ENCODE measurements at regions of chr16 and their contacts with region 1.

Region 1: GRCh38 chr16:57648590-57649442 is 19.3 kb upstream of the ADGRG3 start:
- DNase-seq: peak; percentile 77 to 94 (median 86)
- ATAC-seq: peak; percentile 84
- H3K4me3 ChIP-seq: peak overlapping the region in 1 of 2 experiments; percentile 53
- H3K4me3 Mint-ChIP-seq: peak overlapping the region; percentile 29
- H3K27ac ChIP-seq: peak overlapping the region in 1 of 2 experiments; percentile 69
- H3K27ac Mint-ChIP-seq: peak overlapping the region; percentile 64
- H3K4me1 ChIP-seq: peaks cover 29% of the 10 kb centered on the region
- H3K4me1 Mint-ChIP-seq: peaks cover 37% of the 10 kb centered on the region
- H3K27me3 ChIP-seq: no peaks in the 10 kb centered on the region
- H3K27me3 Mint-ChIP-seq: no peaks in the 10 kb centered on the region
- CTCF ChIP-seq: peak; percentile 100

Region 2: GRCh38 chr16:56932721-56933619 is 715.8 kb before region 1 on chr16:
- CTCF ChIA-PET with region 1: no interaction called
- POLR2A ChIA-PET with region 1: no interaction called
- intact Hi-C with region 1: no loop called
- DNase-seq: peak in 8 of 9 experiments; percentile 21 to 70 (median 37)
- ATAC-seq: no peak
- H3K4me3 ChIP-seq: peak overlapping the region; percentile 96 to 99
- H3K4me3 Mint-ChIP-seq: peak overlapping the region; percentile 98
- H3K27ac ChIP-seq: peak overlapping the region; percentile 83 to 95
- H3K27ac Mint-ChIP-seq: peak overlapping the region; percentile 98
- H3K4me1 ChIP-seq: peaks cover 25% of the 10 kb centered on the region
- H3K4me1 Mint-ChIP-seq: peaks cover 50% of the 10 kb centered on the region
- H3K27me3 ChIP-seq: no peaks in the 10 kb centered on the region
- H3K27me3 Mint-ChIP-seq: no peaks in the 10 kb centered on the region
- CTCF ChIP-seq: no peak

Region 3: DNA sequence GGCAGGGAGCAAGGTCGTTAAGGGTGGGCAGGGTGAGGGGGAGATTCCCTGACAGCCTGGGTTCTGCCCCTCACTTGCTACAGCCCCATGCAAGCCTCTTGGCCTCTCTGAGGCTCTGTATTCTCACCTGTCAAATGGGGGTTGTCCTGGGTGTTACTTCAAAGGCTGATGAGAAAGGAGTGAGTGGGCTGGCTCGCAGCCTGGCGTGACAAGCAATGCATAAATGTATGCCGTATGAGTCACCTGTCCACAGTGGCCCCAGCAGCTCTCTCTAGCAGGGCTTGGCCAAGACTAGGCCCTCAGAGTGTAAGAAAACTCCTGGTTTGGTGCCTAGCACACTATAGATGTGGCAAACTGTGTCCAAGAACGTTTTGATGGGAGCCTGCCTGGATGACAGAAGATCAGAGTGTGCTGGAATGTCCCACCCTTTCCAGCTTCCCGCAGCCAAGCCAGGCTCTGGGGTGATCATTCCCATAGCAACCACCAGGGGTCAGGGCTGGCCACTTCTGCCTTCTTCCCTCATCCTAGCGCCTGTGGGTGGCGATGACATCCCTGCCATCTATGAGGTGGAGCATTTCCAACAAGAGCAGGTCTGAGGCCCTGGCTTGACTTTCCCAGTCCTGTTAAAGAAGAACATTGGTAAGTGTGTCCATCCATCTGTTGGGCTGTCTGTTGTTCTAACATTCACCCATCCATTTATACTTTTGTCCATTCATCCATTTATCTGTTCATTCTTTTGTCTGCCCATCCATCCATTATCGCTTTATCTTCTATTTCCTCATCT is 57.5 kb before region 1 on chr16:
- CTCF ChIA-PET with region 1: interaction called, 423 read pairs
- POLR2A ChIA-PET with region 1: interaction called, 3 read pairs
- intact Hi-C with region 1: loop called (anchors 1 kb)
- DNase-seq: peak in 7 of 9 experiments; percentile 37 to 82 (median 61)
- ATAC-seq: peak; percentile 27
- H3K4me3 ChIP-seq: no peak overlapping the region
- H3K4me3 Mint-ChIP-seq: peak overlapping the region; percentile 66
- H3K27ac ChIP-seq: peak overlapping the region in 1 of 2 experiments; percentile 62
- H3K27ac Mint-ChIP-seq: peak overlapping the region; percentile 84
- H3K4me1 ChIP-seq: peaks cover 34% of the 10 kb centered on the region
- H3K4me1 Mint-ChIP-seq: peaks cover 47% of the 10 kb centered on the region
- H3K27me3 ChIP-seq: no peaks in the 10 kb centered on the region
- H3K27me3 Mint-ChIP-seq: no peaks in the 10 kb centered on the region
- CTCF ChIP-seq: peak; percentile 60

Region 4: GRCh38 chr16:57600048-57600835 is 48.6 kb before region 1 on chr16:
- CTCF ChIA-PET with region 1: interaction called, 180 read pairs
- POLR2A ChIA-PET with region 1: interaction called, 7 read pairs
- intact Hi-C with region 1: loop called in 1 of 2 experiments (anchors 2 kb)
- DNase-seq: peak in 4 of 9 experiments; percentile 39 to 64 (median 55)
- ATAC-seq: peak; percentile 19
- H3K4me3 ChIP-seq: no peak overlapping the region
- H3K4me3 Mint-ChIP-seq: no peak overlapping the region
- H3K27ac ChIP-seq: peak overlapping the region in 1 of 2 experiments; percentile 84
- H3K27ac Mint-ChIP-seq: peak overlapping the region; percentile 57
- H3K4me1 ChIP-seq: peaks cover 44% of the 10 kb centered on the region
- H3K4me1 Mint-ChIP-seq: peaks cover 49% of the 10 kb centered on the region
- H3K27me3 ChIP-seq: no peaks in the 10 kb centered on the region
- H3K27me3 Mint-ChIP-seq: no peaks in the 10 kb centered on the region
- CTCF ChIP-seq: peak; percentile 34

Region 5: GRCh38 chr16:57609541-57610401 is 39.0 kb before region 1 on chr16:
- CTCF ChIA-PET with region 1: interaction called, 64 read pairs
- POLR2A ChIA-PET with region 1: interaction called, 4 read pairs
- intact Hi-C with region 1: no loop called
- DNase-seq: peak in 8 of 9 experiments; percentile 22 to 88 (median 63)
- ATAC-seq: peak; percentile 95
- H3K4me3 ChIP-seq: peak overlapping the region in 1 of 2 experiments; percentile 13
- H3K4me3 Mint-ChIP-seq: peak overlapping the region; percentile 74
- H3K27ac ChIP-seq: peak overlapping the region; percentile 11 to 81
- H3K27ac Mint-ChIP-seq: peak overlapping the region; percentile 84
- H3K4me1 ChIP-seq: peaks cover 15% of the 10 kb centered on the region
- H3K4me1 Mint-ChIP-seq: peaks cover 48% of the 10 kb centered on the region
- H3K27me3 ChIP-seq: no peaks in the 10 kb centered on the region
- H3K27me3 Mint-ChIP-seq: no peaks in the 10 kb centered on the region
- CTCF ChIP-seq: peak; percentile 39

Region 6: DNA sequence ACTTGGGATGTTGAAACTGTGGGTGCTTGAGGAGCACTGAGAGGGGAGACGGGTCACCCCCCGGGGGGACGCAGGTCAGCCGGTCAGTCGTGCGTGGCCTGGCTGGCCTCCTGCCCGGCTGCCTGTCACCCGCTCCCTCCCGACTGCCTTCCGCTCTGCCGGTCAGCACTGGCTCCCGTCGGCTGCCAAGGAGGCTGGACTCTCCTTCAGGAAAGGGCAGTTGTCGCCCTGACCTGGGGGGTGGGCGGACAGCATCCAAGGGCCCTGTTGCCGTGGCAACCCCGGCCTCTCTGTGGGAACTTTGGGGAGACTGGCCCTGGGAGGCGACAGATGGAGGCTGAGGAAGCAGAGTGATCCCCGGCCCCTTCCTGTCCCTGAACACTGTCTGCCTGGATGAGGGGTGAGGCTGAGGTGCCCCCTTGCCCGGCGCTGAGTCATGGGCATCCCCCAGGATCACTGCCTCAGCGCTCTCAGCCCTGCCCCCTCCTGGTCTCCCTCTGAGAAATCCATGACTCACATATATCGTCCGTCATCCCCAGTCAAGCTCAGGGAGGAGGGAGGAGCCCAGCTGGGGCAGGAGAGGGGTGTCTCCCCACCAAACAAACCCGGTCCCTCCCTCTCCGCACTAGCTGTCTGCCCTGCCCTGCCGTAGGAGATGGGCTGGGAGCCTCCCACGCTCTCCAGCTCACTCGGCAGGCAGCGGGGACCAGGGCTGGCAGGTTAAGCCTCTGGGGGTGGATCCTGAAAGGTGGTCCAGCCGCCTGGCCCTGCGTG is 20.6 kb before region 1 on chr16 and contains the start of gene ADGRG1:
- CTCF ChIA-PET with region 1: interaction called, 23 read pairs
- POLR2A ChIA-PET with region 1: no interaction called
- intact Hi-C with region 1: no loop called
- DNase-seq: peak in 5 of 9 experiments; percentile 31 to 70 (median 52)
- ATAC-seq: peak; percentile 78
- H3K4me3 ChIP-seq: peak within 1 kb of the TSS in 1 of 2 experiments; percentile 50
- H3K4me3 Mint-ChIP-seq: peak within 1 kb of the TSS; percentile 42
- H3K27ac ChIP-seq: peak within 1 kb of the TSS in 1 of 2 experiments; percentile 53
- H3K27ac Mint-ChIP-seq: no peak within 1 kb of the TSS
- H3K4me1 ChIP-seq: peaks cover 7% of the 10 kb centered on the region
- H3K4me1 Mint-ChIP-seq: peaks cover 13% of the 10 kb centered on the region
- H3K27me3 ChIP-seq: no peaks in the 10 kb centered on the region
- H3K27me3 Mint-ChIP-seq: peaks cover 13% of the 10 kb centered on the region
- CTCF ChIP-seq: no peak
- total RNA-seq, gene ADGRG1: 3.8 to 4.4 TPM

Region 7: DNA sequence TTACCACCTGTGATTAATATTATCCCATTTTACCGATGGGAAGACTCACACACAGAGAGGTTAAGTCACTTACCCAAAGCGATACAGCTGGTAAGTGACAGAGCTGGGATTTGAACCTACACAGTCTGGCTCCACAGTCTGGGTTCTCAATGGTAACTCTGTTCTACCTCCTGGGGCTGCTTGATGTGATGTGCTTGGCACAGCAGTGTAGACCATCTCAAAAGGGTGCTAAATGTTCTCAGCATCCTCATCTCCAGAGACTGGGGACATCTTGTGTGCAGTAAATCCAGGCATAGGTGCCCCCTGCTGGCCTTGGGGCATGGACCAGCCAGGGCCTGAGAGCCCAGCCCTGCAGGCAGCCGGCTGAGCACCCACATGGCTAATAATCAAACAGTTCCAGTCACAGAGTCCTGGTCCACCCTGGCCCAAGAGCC is 71.3 kb after region 1 on chr16:
- CTCF ChIA-PET with region 1: interaction called, 5 read pairs
- POLR2A ChIA-PET with region 1: no interaction called
- intact Hi-C with region 1: loop called in 1 of 2 experiments (anchors 1 kb)
- DNase-seq: peak in 7 of 9 experiments; percentile 16 to 70 (median 50)
- ATAC-seq: peak; percentile 73
- H3K4me3 ChIP-seq: no peak overlapping the region
- H3K4me3 Mint-ChIP-seq: no peak overlapping the region
- H3K27ac ChIP-seq: no peak overlapping the region
- H3K27ac Mint-ChIP-seq: no peak overlapping the region
- H3K4me1 ChIP-seq: no peaks in the 10 kb centered on the region
- H3K4me1 Mint-ChIP-seq: no peaks in the 10 kb centered on the region
- H3K27me3 ChIP-seq: no peaks in the 10 kb centered on the region
- H3K27me3 Mint-ChIP-seq: no peaks in the 10 kb centered on the region
- CTCF ChIP-seq: no peak

Region 8: GRCh38 chr16:57938936-57939871 is 290.4 kb after region 1 on chr16:
- CTCF ChIA-PET with region 1: no interaction called
- POLR2A ChIA-PET with region 1: no interaction called
- intact Hi-C with region 1: no loop called
- DNase-seq: no peak
- ATAC-seq: no peak
- H3K4me3 ChIP-seq: no peak overlapping the region
- H3K4me3 Mint-ChIP-seq: no peak overlapping the region
- H3K27ac ChIP-seq: no peak overlapping the region
- H3K27ac Mint-ChIP-seq: no peak overlapping the region
- H3K4me1 ChIP-seq: no peaks in the 10 kb centered on the region
- H3K4me1 Mint-ChIP-seq: no peaks in the 10 kb centered on the region
- H3K27me3 ChIP-seq: no peaks in the 10 kb centered on the region
- H3K27me3 Mint-ChIP-seq: peaks cover 4% of the 10 kb centered on the region
- CTCF ChIP-seq: no peak

Measured in CD8-positive, alpha-beta T cell (primary cell).